Activated T-helper 1 cell treated with anti-CD3 and anti-CD28 coated beads, Interleukin-12 subunit alpha, Interleukin-12 subunit beta, Interleukin-2, Interleukin-4 antibody, amounts not matched to agents 30 ng/mL and 10 ng/mL and 1 ng/mL, durations not matched to agents 14 hours and 24 hours and 36 hours (primary cell): ENCODE measurements at regions of chr21 and their contacts with region 1.

Region 1: DNA sequence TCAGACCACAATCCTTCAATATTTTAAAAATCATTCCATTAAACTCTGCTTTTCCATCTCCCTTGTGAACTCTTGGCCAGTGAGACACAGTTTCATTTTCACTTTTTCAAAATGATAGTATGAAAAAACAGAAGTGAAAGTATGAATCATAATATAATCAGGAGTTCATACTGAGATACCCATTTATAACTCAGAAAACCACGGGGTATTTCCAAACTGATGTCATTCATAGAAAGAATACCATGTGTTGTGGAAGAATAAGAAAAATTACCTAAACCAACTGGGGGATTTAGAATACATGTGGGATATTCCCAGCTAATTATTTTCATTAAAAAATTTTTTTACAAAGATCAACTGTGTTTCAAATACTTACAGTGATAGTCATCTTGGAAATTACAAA is 149.9 kb downstream of the MRPL39 start:
- DNase-seq: no peak
- H3K4me3 Mint-ChIP-seq: peak overlapping the region; percentile 61
- H3K27ac Mint-ChIP-seq: peak overlapping the region; percentile 88
- H3K4me1 Mint-ChIP-seq: peaks cover 71% of the 10 kb centered on the region
- H3K27me3 Mint-ChIP-seq: no peaks in the 10 kb centered on the region

Region 2: GRCh38 chr21:25428537-25428936 is 28.9 kb before region 1 on chr21:
- intact Hi-C with region 1: loop called (anchors 1 kb)
- DNase-seq: no peak
- H3K4me3 Mint-ChIP-seq: no peak overlapping the region
- H3K27ac Mint-ChIP-seq: peak overlapping the region; percentile 30
- H3K4me1 Mint-ChIP-seq: peaks cover 46% of the 10 kb centered on the region
- H3K27me3 Mint-ChIP-seq: no peaks in the 10 kb centered on the region

Region 3: DNA sequence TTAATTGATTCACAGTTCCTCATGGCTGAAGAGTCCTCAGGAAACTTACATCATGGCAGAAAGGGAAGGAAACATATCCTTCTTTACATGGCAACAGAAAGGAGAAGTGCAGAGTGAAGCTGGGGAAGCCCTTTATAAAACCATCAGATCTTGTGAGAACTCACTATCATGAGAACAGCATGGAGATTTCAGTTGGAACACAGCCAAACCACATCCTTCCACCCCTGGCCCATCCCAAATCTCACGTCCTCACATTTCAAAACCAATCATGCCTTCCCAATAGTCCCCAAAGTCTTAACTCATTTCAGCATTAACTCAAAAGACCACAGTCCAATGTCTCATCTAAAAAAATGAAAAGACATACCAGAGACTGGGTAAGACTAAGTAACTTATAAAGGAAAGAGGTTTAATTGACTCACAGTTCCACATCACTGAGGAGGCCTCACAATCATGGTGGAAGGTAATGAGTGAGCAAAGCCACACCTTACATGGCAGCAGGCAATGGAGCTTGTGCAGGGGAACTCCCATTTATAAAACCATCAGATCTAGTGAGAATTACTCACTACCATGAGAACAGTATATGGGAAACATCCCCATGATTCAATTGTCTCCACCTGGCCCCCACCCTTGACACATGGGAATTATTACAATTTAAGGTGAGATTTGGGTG is 44.7 kb after region 1 on chr21:
- intact Hi-C with region 1: loop called (anchors 1 kb)
- DNase-seq: no peak
- H3K4me3 Mint-ChIP-seq: no peak overlapping the region
- H3K27ac Mint-ChIP-seq: peak overlapping the region; percentile 84
- H3K4me1 Mint-ChIP-seq: peaks cover 21% of the 10 kb centered on the region
- H3K27me3 Mint-ChIP-seq: no peaks in the 10 kb centered on the region

Region 4: GRCh38 chr21:25509862-25510261 is 52.5 kb after region 1 on chr21:
- intact Hi-C with region 1: loop called (anchors 1 kb)
- DNase-seq: no peak
- H3K4me3 Mint-ChIP-seq: no peak overlapping the region
- H3K27ac Mint-ChIP-seq: peak overlapping the region; percentile 13
- H3K4me1 Mint-ChIP-seq: peaks cover 42% of the 10 kb centered on the region
- H3K27me3 Mint-ChIP-seq: no peaks in the 10 kb centered on the region